ENCODE measurements at regions of chr9 and their contacts with region 1.

Region 1: GRCh38 chr9:98998441-98999151 is 54.9 kb downstream of the COL15A1 start:
- DNase-seq: peak; percentile 85 to 88
- ATAC-seq: peak; percentile 78 to 90 (median 88)
- H3K4me3 ChIP-seq: no peak overlapping the region
- H3K27ac ChIP-seq: peak overlapping the region; percentile 65
- H3K4me1 ChIP-seq: peaks cover 11% of the 10 kb centered on the region
- H3K27me3 ChIP-seq: peaks cover 0 to 6% (median 0%) of the 10 kb centered on the region in 3 donors
- CTCF ChIP-seq: peak; percentile 87

Region 2: GRCh38 chr9:98848450-98849149 is 150.0 kb before region 1 on chr9:
- intact Hi-C with region 1: loop called (anchors 2 kb)
- DNase-seq: peak; percentile 87 to 95
- ATAC-seq: peak; percentile 99 to 100 (median 99)
- H3K4me3 ChIP-seq: peak overlapping the region; percentile 56
- H3K27ac ChIP-seq: no peak overlapping the region
- H3K4me1 ChIP-seq: peaks cover 4% of the 10 kb centered on the region
- H3K27me3 ChIP-seq: no peaks in the 10 kb centered on the region
- CTCF ChIP-seq: peak; percentile 94

Region 3: GRCh38 chr9:98860871-98861293 is 137.7 kb before region 1 on chr9:
- intact Hi-C with region 1: loop called in 1 of 2 experiments (anchors 2 kb)
- DNase-seq: peak; percentile 46 to 70
- ATAC-seq: peak; percentile 48 to 64 (median 54)
- H3K4me3 ChIP-seq: no peak overlapping the region
- H3K27ac ChIP-seq: no peak overlapping the region
- H3K4me1 ChIP-seq: no peaks in the 10 kb centered on the region
- H3K27me3 ChIP-seq: peaks cover 0 to 4% (median 3%) of the 10 kb centered on the region in 3 donors
- CTCF ChIP-seq: peak; percentile 35

Region 4: GRCh38 chr9:98974994-98975712 is 23.4 kb before region 1 on chr9:
- intact Hi-C with region 1: loop called in 1 of 2 experiments (anchors 2 kb)
- DNase-seq: peak; percentile 81 to 91
- ATAC-seq: peak; percentile 88 to 89 (median 88)
- H3K4me3 ChIP-seq: peak overlapping the region; percentile 52
- H3K27ac ChIP-seq: peak overlapping the region; percentile 36
- H3K4me1 ChIP-seq: peaks cover 27% of the 10 kb centered on the region
- H3K27me3 ChIP-seq: peaks cover 0 to 13% (median 0%) of the 10 kb centered on the region in 3 donors
- CTCF ChIP-seq: peak; percentile 97

Region 5: DNA sequence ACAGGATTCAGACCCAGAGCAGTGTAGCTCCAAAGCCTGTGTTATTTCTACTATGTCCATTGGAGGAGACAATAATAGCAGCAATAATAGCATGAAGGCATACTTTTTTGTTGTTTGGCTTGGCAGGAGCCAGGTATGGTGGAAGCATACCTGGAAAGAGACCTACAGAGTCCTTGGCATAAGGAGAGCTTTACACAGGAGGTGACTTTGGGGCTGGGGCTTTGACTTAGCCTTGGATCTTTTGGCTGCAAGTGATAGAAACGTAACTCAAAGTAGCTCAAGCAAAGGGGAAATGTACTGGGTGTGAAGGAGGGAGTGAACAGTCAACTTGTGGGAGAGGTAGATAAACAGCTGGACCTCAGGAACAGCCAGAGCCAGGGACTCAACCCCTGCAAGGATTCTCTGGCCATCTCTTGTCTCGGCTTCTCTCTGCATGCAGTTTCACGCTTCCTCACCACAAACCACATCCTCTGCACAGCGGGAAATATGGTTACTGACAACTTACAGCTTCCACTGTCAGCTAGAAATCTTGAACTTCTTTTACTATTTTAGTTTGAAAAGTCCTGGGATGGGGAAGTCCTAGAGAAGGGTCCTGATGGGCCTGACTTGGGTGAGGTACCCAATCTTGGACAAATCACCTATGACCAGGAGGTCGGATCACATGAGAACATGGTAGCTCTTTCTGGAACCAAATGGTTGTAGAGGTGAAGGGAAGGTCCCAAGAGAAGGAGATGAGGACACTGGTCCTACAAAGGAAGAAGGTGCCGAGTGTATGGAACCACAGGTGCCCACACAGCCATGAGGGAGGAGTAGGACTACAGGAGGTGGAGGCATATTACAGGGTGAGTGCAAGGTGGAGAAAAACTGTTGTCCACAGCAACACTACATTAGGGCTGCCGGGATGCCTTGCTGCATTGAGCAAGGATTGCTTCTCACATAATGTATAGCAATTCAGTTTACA is 59.3 kb after region 1 on chr9:
- intact Hi-C with region 1: no loop called
- DNase-seq: no peak
- ATAC-seq: peak in 1 of 4 donors; percentile 34
- H3K4me3 ChIP-seq: no peak overlapping the region
- H3K27ac ChIP-seq: no peak overlapping the region
- H3K4me1 ChIP-seq: no peaks in the 10 kb centered on the region
- H3K27me3 ChIP-seq: no peaks in the 10 kb centered on the region
- CTCF ChIP-seq: no peak

Region 6: GRCh38 chr9:99134893-99135341 is 136.3 kb after region 1 on chr9:
- intact Hi-C with region 1: loop called (anchors 2 to 5 kb)
- DNase-seq: no peak
- ATAC-seq: no peak
- H3K4me3 ChIP-seq: no peak overlapping the region
- H3K27ac ChIP-seq: no peak overlapping the region
- H3K4me1 ChIP-seq: peaks cover 34% of the 10 kb centered on the region
- H3K27me3 ChIP-seq: no peaks in the 10 kb centered on the region
- CTCF ChIP-seq: no peak

Region 7: GRCh38 chr9:99140685-99141314 is 142.2 kb after region 1 on chr9:
- intact Hi-C with region 1: loop called (anchors 2 to 5 kb)
- DNase-seq: peak in 1 of 2 donors; percentile 41
- ATAC-seq: peak; percentile 76 to 90 (median 82)
- H3K4me3 ChIP-seq: no peak overlapping the region
- H3K27ac ChIP-seq: no peak overlapping the region
- H3K4me1 ChIP-seq: peaks cover 34% of the 10 kb centered on the region
- H3K27me3 ChIP-seq: no peaks in the 10 kb centered on the region
- CTCF ChIP-seq: peak; percentile 89